ENCODE measurements at regions of chr1 and their contacts with region 1.

Region 1: DNA sequence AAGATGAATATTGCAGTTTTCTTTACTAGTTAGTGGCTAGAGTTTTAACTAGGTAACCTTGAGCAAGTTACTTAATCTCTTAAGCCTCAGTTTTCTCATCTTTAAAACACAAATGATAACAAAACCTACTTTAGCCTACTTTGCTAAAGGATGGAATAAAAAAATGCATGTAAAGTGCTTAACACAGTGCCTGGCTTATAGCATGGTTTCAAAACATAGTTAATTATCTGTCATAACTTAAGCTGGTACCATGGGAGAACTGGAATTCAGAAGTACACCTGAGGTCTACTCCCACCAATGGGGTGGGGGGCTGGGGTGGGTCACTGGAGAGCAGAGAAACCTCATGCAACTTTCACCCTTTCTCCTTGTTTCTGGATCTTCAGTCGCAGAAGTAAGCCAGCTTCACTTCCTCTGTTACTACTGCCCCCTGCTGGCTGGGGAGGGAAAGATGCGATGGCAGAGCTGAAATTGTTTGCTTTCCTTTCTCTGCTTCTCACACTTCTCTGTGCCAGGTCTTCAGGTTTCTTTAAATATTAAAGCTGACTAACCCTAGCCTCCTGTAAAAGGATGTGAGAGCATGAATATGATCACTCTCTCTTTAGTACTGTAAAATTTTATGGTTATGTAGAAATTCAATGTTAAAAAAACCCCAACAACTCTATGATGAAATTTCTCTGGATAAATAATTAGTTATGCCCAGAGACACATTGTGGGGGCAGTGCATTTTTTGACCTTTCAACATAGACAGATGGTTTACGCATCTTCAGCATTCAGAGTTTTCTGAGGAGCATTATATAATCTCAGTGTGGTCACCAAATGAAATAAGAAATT is 324.2 kb downstream of the HLX start:
- DNase-seq: peak in 8 of 9 donors; percentile 24 to 71 (median 37)
- ATAC-seq: peak; percentile 59
- H3K4me3 ChIP-seq: no peak overlapping the region
- H3K4me3 Mint-ChIP-seq: no peak overlapping the region
- H3K27ac ChIP-seq: no peak overlapping the region
- H3K27ac Mint-ChIP-seq: no peak overlapping the region
- H3K4me1 ChIP-seq: no peaks in the 10 kb centered on the region
- H3K4me1 Mint-ChIP-seq: peaks cover 0 to 1% (median 0%) of the 10 kb centered on the region in 7 donors
- H3K27me3 ChIP-seq: no peaks in the 10 kb centered on the region
- H3K27me3 Mint-ChIP-seq: peaks cover 0 to 12% (median 6%) of the 10 kb centered on the region in 5 donors

Region 2: GRCh38 chr1:220810179-220810653 is 393.2 kb before region 1 on chr1:
- CTCF ChIA-PET with region 1: no interaction called
- POLR2A ChIA-PET with region 1: no interaction called
- intact Hi-C with region 1: loop called (anchors 1 kb)
- DNase-seq: peak; percentile 48 to 71 (median 59)
- ATAC-seq: peak; percentile 97
- H3K4me3 ChIP-seq: no peak overlapping the region
- H3K4me3 Mint-ChIP-seq: peak overlapping the region; percentile 33 to 86 (median 75)
- H3K27ac ChIP-seq: no peak overlapping the region
- H3K27ac Mint-ChIP-seq: peak overlapping the region in 1 of 9 donors; percentile 25
- H3K4me1 ChIP-seq: no peaks in the 10 kb centered on the region
- H3K4me1 Mint-ChIP-seq: peaks cover 0 to 9% (median 7%) of the 10 kb centered on the region in 7 donors
- H3K27me3 ChIP-seq: no peaks in the 10 kb centered on the region
- H3K27me3 Mint-ChIP-seq: peaks cover 5 to 33% (median 26%) of the 10 kb centered on the region in 5 donors

Region 3: DNA sequence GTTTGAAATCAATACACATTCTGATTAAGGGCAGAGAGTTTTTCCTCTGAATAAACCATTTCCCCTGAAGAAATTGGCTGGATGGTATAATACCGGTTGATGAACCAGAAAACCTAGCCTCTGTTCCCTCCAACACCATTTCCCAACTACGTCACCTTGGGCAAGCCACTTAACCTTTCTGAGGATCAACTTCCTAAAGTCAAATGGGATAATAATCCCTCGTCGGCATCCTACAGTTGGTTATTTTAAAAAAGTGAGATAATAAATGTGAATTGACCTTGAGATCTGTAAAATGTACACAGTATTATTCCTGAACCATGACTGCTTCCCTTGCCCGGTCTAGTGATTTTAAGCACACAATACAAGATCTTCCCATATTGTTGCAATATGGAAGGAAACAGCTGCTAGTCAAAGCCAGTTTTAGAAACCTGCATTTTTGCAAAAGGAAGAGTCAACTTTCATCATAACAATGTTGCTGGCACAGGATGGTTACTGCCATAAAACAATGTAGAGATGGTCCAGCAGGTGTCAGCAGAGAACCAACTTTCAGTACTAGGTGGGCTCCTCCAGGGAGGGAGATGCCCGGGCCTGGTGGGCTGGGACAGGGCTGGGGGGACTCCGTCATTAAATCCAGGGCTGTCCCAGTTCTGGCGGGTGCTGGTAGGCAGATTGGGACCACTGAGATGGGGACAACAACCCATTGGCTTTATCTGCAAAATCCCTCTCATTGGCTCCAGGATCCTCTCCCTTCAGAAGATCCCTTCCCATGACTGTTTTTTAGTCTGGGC is 329.4 kb before region 1 on chr1:
- CTCF ChIA-PET with region 1: no interaction called
- POLR2A ChIA-PET with region 1: no interaction called
- intact Hi-C with region 1: loop called in 1 of 2 experiments (anchors 1 kb)
- DNase-seq: no peak
- ATAC-seq: no peak
- H3K4me3 ChIP-seq: no peak overlapping the region
- H3K4me3 Mint-ChIP-seq: no peak overlapping the region
- H3K27ac ChIP-seq: no peak overlapping the region
- H3K27ac Mint-ChIP-seq: no peak overlapping the region
- H3K4me1 ChIP-seq: no peaks in the 10 kb centered on the region
- H3K4me1 Mint-ChIP-seq: peaks cover 7 to 23% (median 22%) of the 10 kb centered on the region in 7 donors
- H3K27me3 ChIP-seq: peaks cover 0 to 8% of the 10 kb centered on the region in 2 donors
- H3K27me3 Mint-ChIP-seq: peaks cover 55 to 85% (median 73%) of the 10 kb centered on the region in 5 donors

Region 4: DNA sequence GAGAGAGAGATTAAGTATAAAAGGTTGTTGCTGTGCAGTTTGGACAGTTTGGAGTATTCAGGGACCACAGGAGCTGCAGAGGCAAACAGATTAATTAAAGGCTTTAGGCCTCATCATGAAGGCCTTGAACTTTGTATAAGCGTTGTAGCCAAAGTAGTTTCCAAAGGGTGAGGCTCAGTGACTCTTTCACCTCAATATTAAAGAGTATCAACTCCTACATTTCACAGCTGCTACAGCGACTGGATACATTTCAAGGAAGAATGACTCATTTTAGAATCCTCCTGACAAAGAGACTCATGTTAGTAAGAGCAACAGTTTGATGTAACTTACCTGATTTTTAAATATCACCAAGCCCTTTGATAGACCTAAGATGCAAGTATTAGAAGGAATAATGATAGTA is 31.4 kb after region 1 on chr1:
- CTCF ChIA-PET with region 1: no interaction called
- POLR2A ChIA-PET with region 1: no interaction called
- intact Hi-C with region 1: no loop called
- DNase-seq: no peak
- ATAC-seq: no peak
- H3K4me3 ChIP-seq: no peak overlapping the region
- H3K4me3 Mint-ChIP-seq: no peak overlapping the region
- H3K27ac ChIP-seq: no peak overlapping the region
- H3K27ac Mint-ChIP-seq: no peak overlapping the region
- H3K4me1 ChIP-seq: no peaks in the 10 kb centered on the region
- H3K4me1 Mint-ChIP-seq: no peaks in the 10 kb centered on the region
- H3K27me3 ChIP-seq: no peaks in the 10 kb centered on the region
- H3K27me3 Mint-ChIP-seq: peaks cover 0 to 15% (median 7%) of the 10 kb centered on the region in 5 donors

Region 5: GRCh38 chr1:221335161-221336101 is 132.0 kb after region 1 on chr1:
- CTCF ChIA-PET with region 1: no interaction called
- POLR2A ChIA-PET with region 1: no interaction called
- intact Hi-C with region 1: no loop called
- DNase-seq: no peak
- ATAC-seq: no peak
- H3K4me3 ChIP-seq: no peak overlapping the region
- H3K4me3 Mint-ChIP-seq: no peak overlapping the region
- H3K27ac ChIP-seq: no peak overlapping the region
- H3K27ac Mint-ChIP-seq: no peak overlapping the region
- H3K4me1 ChIP-seq: no peaks in the 10 kb centered on the region
- H3K4me1 Mint-ChIP-seq: peaks cover 0 to 4% (median 0%) of the 10 kb centered on the region in 7 donors
- H3K27me3 ChIP-seq: no peaks in the 10 kb centered on the region
- H3K27me3 Mint-ChIP-seq: peaks cover 0 to 36% (median 20%) of the 10 kb centered on the region in 5 donors